Naive thymus-derived CD8-positive, alpha-beta T cell (primary cell): ENCODE measurements at regions of chr10 and their contacts with region 1.

Region 1: DNA sequence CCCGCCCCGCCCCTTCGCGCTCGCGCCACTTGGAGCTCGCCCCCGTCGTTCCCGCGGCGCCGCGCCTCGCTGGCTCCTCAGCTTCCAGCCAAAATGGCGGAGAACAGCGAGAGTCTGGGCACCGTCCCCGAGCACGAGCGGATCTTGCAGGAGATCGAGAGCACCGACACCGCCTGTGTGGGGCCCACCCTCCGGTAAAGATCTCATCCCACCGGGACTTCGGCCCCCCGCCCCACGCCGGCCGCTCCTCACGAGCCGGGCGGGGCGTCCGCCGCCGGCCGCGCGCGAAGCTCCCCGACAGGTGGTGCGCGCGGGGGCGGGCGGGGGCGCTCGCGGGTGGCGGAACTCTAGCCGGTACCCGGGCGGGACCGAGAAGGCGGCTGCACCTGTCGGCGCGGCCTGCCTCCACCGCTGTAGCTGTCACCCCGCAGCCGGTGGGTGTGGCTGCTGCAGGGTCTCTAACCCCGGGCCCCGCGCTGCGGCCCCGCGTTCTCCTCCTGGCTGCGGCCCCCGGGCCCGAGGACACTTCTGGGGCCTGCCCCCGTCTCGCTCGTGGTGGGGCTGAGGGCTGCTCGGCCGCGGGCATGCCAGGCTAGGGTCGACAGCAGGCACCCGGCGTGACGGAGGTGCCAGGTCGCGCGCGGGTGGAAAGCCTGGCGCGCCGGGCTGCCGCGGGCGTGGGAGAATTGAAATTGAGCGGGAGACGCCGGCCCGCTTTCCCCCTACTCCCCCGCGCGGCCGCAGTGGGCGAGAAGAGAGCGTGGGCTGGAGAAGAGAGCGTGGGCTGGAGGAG is at the start of gene EXOC6:
- DNase-seq: peak; percentile 75 to 95 (median 88)
- ATAC-seq: peak; percentile 86 to 88
- H3K4me3 Mint-ChIP-seq: peak within 1 kb of the TSS; percentile 82 to 93 (median 89)
- H3K27ac Mint-ChIP-seq: peak within 1 kb of the TSS; percentile 55 to 95 (median 92)
- H3K4me1 Mint-ChIP-seq: peaks cover 6 to 41% (median 31%) of the 10 kb centered on the region in 4 donors
- H3K27me3 Mint-ChIP-seq: no peaks in the 10 kb centered on the region
- polyA plus RNA-seq, gene EXOC6: 5.5 to 6.5 (median 5.8) TPM

Region 2: GRCh38 chr10:92592761-92593618 is 255.6 kb before region 1 on chr10 and contains the start of gene KIF11:
- POLR2A ChIA-PET with region 1: interaction called, 10 read pairs
- DNase-seq: peak; percentile 89 to 98 (median 94)
- ATAC-seq: peak; percentile 81 to 85
- H3K4me3 Mint-ChIP-seq: peak within 1 kb of the TSS; percentile 94 to 99 (median 98)
- H3K27ac Mint-ChIP-seq: peak within 1 kb of the TSS; percentile 97 to 100 (median 100)
- H3K4me1 Mint-ChIP-seq: peaks cover 16 to 42% (median 30%) of the 10 kb centered on the region in 4 donors
- H3K27me3 Mint-ChIP-seq: no peaks in the 10 kb centered on the region
- polyA plus RNA-seq, gene KIF11: 0.20 to 0.72 (median 0.42) TPM

Region 3: GRCh38 chr10:92832998-92833650 is 15.5 kb before region 1 on chr10:
- POLR2A ChIA-PET with region 1: no interaction called
- DNase-seq: no peak
- ATAC-seq: no peak
- H3K4me3 Mint-ChIP-seq: no peak overlapping the region
- H3K27ac Mint-ChIP-seq: no peak overlapping the region
- H3K4me1 Mint-ChIP-seq: peaks cover 3 to 18% (median 9%) of the 10 kb centered on the region in 4 donors
- H3K27me3 Mint-ChIP-seq: no peaks in the 10 kb centered on the region

Region 4: GRCh38 chr10:92876509-92877036 is 27.9 kb after region 1 on chr10:
- POLR2A ChIA-PET with region 1: interaction called, 11 read pairs
- DNase-seq: no peak
- ATAC-seq: no peak
- H3K4me3 Mint-ChIP-seq: peak overlapping the region in 7 of 10 donors; percentile 2 to 49 (median 32)
- H3K27ac Mint-ChIP-seq: peak overlapping the region in 4 of 10 donors; percentile 6 to 69 (median 42)
- H3K4me1 Mint-ChIP-seq: peaks cover 16 to 56% (median 36%) of the 10 kb centered on the region in 4 donors
- H3K27me3 Mint-ChIP-seq: no peaks in the 10 kb centered on the region